Mammary epithelial cell (primary cell): ENCODE measurements at regions of chr6 and their contacts with region 1.

Region 1: DNA sequence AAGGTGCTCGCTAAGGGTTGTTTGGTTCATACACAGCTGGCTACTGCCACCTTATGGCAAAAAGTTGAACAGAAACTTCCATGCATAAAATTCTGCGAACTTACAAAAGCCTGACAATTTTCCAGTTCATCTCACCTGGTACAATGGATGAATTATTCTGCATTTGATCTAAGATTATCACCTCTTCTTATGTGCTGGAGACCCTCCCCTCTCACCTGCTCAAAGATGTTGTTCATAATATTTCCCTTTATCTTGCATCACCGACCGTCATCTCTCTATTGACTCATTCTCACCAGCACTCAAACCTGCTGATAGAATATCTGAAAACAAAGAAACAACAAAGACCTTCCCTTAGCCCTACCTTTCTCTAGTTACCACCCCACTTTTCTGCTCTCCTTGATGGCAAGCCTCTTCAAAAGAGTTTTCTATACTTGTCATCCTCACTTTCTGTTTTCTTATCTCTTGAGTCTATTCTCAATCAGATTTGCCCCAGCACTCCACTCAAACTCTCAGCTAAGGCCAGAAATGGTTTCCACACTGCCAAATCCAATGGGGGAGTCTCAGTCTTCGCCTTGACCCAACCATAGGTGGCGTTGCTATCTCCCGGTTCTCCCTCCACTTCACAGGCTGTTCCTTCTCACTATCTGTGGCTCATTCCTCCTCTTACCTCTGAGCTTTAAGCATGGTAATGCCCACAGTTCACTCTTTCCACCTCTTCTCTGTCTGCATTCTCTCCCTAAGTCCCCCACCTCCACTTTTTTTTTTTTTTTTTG is 25.8 kb downstream of the SNRNP48 start:
- DNase-seq: peak; percentile 62
- H3K4me3 ChIP-seq: no peak overlapping the region
- H3K27ac ChIP-seq: no peak overlapping the region
- H3K4me1 ChIP-seq: peaks cover 22% of the 10 kb centered on the region
- H3K27me3 ChIP-seq: no peaks in the 10 kb centered on the region
- CTCF ChIP-seq: peak; percentile 71 to 81

Region 2: GRCh38 chr6:6724539-6725467 is 891.0 kb before region 1 on chr6:
- CTCF ChIA-PET with region 1: no interaction called
- dilution Hi-C with region 1: no loop called
- in situ Hi-C with region 1: loop called in 1 of 2 experiments (anchors 25 kb)
- intact Hi-C with region 1: loop called (anchors 1 kb)
- DNase-seq: peak; percentile 55
- H3K4me3 ChIP-seq: peak overlapping the region; percentile 26 to 47 (median 34)
- H3K27ac ChIP-seq: no peak overlapping the region
- H3K4me1 ChIP-seq: peaks cover 13% of the 10 kb centered on the region
- H3K27me3 ChIP-seq: no peaks in the 10 kb centered on the region
- CTCF ChIP-seq: peak; percentile 49 to 78

Region 3: GRCh38 chr6:7312616-7313504 is 302.9 kb before region 1 on chr6 and contains the start of gene SSR1:
- CTCF ChIA-PET with region 1: no interaction called
- dilution Hi-C with region 1: no loop called
- in situ Hi-C with region 1: no loop called
- intact Hi-C with region 1: loop called (anchors 1 kb)
- DNase-seq: peak; percentile 96
- H3K4me3 ChIP-seq: peak within 1 kb of the TSS; percentile 74 to 97 (median 89)
- H3K27ac ChIP-seq: peak within 1 kb of the TSS; percentile 85
- H3K4me1 ChIP-seq: peaks cover 12% of the 10 kb centered on the region
- H3K27me3 ChIP-seq: no peaks in the 10 kb centered on the region
- CTCF ChIP-seq: no peak
- total RNA-seq, gene SSR1: 93.5 to 179 TPM

Region 4: GRCh38 chr6:7604506-7604905 is 11.3 kb before region 1 on chr6:
- CTCF ChIA-PET with region 1: no interaction called
- dilution Hi-C with region 1: no loop called
- in situ Hi-C with region 1: no loop called
- intact Hi-C with region 1: no loop called
- DNase-seq: no peak
- H3K4me3 ChIP-seq: no peak overlapping the region
- H3K27ac ChIP-seq: no peak overlapping the region
- H3K4me1 ChIP-seq: no peaks in the 10 kb centered on the region
- H3K27me3 ChIP-seq: no peaks in the 10 kb centered on the region
- CTCF ChIP-seq: no peak

Region 5: GRCh38 chr6:7640607-7641577 is 25.1 kb after region 1 on chr6:
- CTCF ChIA-PET with region 1: no interaction called
- dilution Hi-C with region 1: no loop called
- in situ Hi-C with region 1: no loop called
- intact Hi-C with region 1: loop called (anchors 2 kb)
- DNase-seq: peak; percentile 94
- H3K4me3 ChIP-seq: no peak overlapping the region
- H3K27ac ChIP-seq: peak overlapping the region; percentile 52
- H3K4me1 ChIP-seq: peaks cover 37% of the 10 kb centered on the region
- H3K27me3 ChIP-seq: no peaks in the 10 kb centered on the region
- CTCF ChIP-seq: peak; percentile 20 to 23

Region 6: DNA sequence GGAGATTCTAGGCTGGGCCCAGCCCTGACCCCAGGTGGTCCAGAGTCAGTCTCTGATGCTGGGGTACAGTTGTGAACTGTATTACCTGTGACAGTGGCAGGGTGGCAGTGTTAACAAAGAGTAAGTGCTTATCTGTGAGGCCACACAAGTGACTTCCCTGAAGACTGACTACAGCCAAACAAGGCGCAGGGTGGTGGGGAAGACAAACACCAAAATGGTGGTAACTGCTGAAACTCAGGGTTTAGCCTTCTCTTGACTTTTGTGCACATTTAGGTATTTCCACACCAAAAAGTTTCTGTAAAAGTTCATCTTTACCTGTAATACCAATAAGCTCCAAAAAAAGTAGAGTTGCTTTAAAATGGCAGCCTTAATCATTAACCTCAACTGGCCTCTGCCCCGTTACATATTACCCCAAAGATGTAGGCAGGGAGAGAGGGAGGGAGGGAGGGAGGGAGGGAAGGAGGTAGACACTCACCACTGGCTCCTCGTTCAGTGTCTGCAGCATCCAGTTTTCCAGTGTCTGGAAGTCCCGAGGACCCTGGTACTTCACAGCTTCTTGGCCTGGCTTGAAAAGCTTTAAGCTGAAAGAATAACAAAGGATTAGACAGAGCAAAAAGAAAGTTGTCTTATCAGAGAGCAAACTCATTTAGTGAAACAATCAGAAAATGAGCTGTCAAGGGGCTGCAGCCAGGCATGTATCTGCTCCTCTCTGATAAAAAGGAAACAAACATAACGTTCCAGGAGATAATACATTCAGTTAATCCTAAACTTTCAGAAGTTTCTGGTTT is 283.5 kb after region 1 on chr6:
- CTCF ChIA-PET with region 1: interaction called, 4 read pairs
- dilution Hi-C with region 1: no loop called
- in situ Hi-C with region 1: no loop called
- intact Hi-C with region 1: loop called (anchors 10 kb)
- DNase-seq: no peak
- H3K4me3 ChIP-seq: no peak overlapping the region
- H3K27ac ChIP-seq: no peak overlapping the region
- H3K4me1 ChIP-seq: no peaks in the 10 kb centered on the region
- H3K27me3 ChIP-seq: no peaks in the 10 kb centered on the region
- CTCF ChIP-seq: no peak